Activated CD8-positive, alpha-beta T cell treated with anti-CD3 and anti-CD28 coated beads, Interleukin-2, amount 10 ng/mL, durations not matched to agents 7 days and 5 days (primary cell): ENCODE measurements at regions of chr10 and their contacts with region 1.

Region 1: DNA sequence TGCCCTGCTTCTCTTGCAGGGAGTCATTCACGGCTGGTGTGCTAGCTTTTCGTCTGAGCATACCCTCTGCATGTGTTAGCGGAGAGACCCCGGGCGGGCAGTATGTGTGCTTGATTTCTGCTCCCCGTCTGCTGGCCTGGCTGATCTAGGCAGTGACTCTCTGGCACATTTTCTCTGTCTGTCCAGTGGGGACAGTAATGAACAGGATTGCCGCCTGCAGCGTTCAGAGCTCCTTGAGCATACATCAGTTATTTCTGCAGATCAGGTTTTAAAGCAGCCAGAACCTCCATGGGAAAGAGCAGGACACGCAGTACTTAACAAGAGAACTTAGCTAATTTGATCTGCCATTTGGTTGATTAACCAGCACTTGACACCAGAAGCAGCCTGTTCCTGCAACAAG is 242.5 kb downstream of the CELF2 start:
- DNase-seq: no peak
- ATAC-seq: no peak
- H3K4me3 Mint-ChIP-seq: no peak overlapping the region
- H3K27ac Mint-ChIP-seq: peak overlapping the region; percentile 62
- H3K4me1 Mint-ChIP-seq: peaks cover 52% of the 10 kb centered on the region
- H3K27me3 Mint-ChIP-seq: no peaks in the 10 kb centered on the region

Region 2: DNA sequence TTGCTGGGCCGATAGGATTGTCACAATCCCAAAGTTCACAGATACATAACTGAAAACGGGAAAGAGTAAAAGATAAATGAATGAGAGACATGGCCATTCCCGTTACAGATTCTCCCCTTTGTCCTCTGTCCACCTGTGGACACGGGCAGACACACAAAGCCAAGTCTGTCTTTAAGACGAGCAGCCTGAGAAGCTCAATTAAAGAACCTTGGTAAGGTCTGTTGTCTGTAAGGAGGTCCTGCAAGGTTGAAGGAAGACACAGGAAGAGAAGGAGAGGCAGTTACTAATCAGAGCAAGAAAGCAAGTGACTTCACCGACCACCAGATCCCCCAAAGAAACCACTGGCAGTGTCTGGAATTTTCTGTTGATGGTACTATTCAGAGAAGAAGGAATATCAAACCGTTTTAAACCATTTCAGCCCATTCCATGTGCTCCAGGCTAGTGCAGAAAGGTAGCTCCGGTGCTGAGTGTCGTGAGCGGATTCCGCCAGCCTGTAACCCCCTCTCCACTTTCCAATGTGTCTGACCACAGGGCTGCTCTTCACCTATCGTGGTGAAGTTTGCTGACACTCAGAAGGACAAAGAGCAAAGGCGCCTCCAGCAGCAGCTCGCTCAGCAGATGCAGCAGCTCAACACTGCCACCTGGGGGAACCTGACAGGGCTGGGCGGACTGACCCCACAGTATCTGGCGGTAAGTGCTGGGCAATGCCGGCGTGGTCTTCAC is 10.1 kb after region 1 on chr10:
- CTCF ChIA-PET with region 1: interaction called, 13 read pairs
- POLR2A ChIA-PET with region 1: no interaction called
- DNase-seq: peak; percentile 69
- ATAC-seq: peak; percentile 79
- H3K4me3 Mint-ChIP-seq: no peak overlapping the region
- H3K27ac Mint-ChIP-seq: peak overlapping the region; percentile 53
- H3K4me1 Mint-ChIP-seq: peaks cover 40% of the 10 kb centered on the region
- H3K27me3 Mint-ChIP-seq: no peaks in the 10 kb centered on the region